ENCODE measurements at regions of chr11 and their contacts with region 1.

Region 1: GRCh38 chr11:3841426-3842350 is 929 bp upstream of the RHOG start:
- DNase-seq: peak; percentile 76 to 95 (median 90)

Region 2: GRCh38 chr11:3797329-3798095 is 44.2 kb before region 1 on chr11 and contains the start of gene NUP98:
- intact Hi-C with region 1: loop called (anchors 5 kb)
- DNase-seq: peak; percentile 99 to 100 (median 100)

Region 3: DNA sequence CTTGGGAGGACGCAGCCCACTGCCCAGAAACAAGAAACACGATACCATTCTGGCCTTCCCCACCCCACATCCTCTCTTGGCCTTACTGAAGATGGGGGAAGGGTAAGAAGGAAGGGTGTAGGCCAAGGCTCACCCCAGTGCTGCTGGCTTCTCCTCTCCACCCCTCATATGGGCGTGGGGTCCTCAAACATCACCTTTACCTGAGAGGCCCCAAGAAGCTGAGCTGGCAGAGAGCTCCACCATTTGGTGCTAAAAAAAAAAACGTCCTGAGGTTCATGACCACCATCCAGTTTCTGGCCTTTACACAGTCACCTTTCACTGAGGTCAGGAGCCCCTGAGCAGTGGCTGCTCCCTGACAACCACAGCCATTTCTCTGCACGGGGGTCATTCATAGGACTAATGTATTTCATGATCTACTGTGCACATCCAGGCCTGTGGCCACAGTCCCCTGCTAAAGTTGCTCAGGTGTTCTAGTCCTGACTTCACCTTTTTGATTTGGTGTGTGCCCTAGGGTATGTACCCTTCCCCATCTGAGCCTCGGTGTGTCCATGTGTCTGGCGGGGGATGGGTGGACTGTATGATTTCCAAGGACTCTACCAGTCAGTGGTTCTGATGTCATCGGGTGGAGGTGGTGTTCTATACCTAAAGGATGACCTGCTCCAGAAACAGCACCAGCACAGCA is 16.1 kb before region 1 on chr11:
- intact Hi-C with region 1: loop called (anchors 2 kb)
- DNase-seq: peak in 1 of 42 donors; percentile 10

Region 4: GRCh38 chr11:4019891-4020290 is 178.2 kb after region 1 on chr11:
- intact Hi-C with region 1: no loop called
- DNase-seq: no peak